Heart left ventricle (tissue), 16 donors: ENCODE measurements at regions of chr5 and their contacts with region 1.

Region 1: GRCh38 chr5:134904630-134905245 is at the start of gene PCBD2:
- DNase-seq: peak; percentile 91 to 97 (median 93)
- ATAC-seq: peak; percentile 93 to 96 (median 94)
- H3K4me3 ChIP-seq: peak within 1 kb of the TSS; percentile 45 to 97 (median 86)
- H3K27ac ChIP-seq: peak within 1 kb of the TSS; percentile 98 to 100 (median 100)
- H3K4me1 ChIP-seq: peaks cover 0 to 23% (median 0%) of the 10 kb centered on the region in 12 donors
- H3K27me3 ChIP-seq: no peaks in the 10 kb centered on the region
- CTCF ChIP-seq: peak; percentile 74 to 95 (median 89)
- POLR2A ChIP-seq: peak in 1 of 2 donors; percentile 54
- total RNA-seq, gene PCBD2: 14.0 to 31.6 (median 21.2) TPM

Region 2: DNA sequence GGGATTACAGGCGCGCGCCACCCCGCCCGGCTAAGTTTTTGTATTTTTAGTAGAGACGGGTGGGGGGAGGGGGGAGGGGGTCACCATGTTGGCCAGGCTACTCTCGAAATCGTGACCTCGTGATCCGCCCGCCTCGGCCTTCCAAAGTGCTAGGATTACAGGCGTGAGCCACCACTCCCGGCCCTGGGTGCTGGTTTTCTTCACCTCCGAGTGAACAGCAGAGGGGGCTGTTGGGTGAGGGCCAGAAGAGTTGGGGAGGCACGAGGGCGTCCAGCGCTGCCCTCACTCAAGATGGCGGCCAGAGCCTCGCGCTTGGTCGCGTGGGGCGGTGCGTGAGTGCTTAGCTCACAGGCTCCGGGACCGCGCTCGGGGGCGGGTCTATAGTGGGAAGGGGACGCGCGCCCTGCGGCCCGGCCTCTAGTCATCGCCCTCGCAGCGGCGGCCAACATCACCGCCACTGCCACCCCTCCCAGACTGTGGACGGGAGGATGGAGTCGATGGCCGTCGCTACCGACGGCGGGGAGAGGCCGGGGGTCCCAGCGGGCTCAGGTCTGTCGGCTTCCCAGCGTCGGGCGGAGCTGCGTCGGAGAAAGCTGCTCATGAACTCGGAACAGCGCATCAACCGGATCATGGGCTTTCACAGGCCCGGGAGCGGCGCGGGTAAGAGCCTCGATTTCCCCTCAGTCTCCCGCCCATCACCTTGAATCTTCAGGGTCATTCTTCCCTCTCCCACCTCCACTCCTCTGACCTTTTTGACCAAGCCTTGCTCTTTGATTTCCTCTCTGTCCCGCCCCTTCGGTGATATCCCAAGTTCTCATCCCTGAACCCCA is 166.4 kb before region 1 on chr5 and contains the start of gene CAMLG:
- intact Hi-C with region 1: loop called in 7 of 10 experiments (anchors 1 to 5 kb)
- DNase-seq: peak; percentile 98 to 99 (median 99)
- ATAC-seq: peak; percentile 99 to 100 (median 100)
- H3K4me3 ChIP-seq: peak within 1 kb of the TSS; percentile 75 to 97 (median 88)
- H3K27ac ChIP-seq: peak within 1 kb of the TSS; percentile 78 to 96 (median 92)
- H3K4me1 ChIP-seq: peaks cover 0 to 30% (median 12%) of the 10 kb centered on the region in 12 donors
- H3K27me3 ChIP-seq: no peaks in the 10 kb centered on the region
- CTCF ChIP-seq: peak; percentile 40 to 76 (median 61)
- POLR2A ChIP-seq: peak; percentile 42 to 93
- total RNA-seq, gene CAMLG: 11.6 to 20.9 (median 17.6) TPM

Region 3: DNA sequence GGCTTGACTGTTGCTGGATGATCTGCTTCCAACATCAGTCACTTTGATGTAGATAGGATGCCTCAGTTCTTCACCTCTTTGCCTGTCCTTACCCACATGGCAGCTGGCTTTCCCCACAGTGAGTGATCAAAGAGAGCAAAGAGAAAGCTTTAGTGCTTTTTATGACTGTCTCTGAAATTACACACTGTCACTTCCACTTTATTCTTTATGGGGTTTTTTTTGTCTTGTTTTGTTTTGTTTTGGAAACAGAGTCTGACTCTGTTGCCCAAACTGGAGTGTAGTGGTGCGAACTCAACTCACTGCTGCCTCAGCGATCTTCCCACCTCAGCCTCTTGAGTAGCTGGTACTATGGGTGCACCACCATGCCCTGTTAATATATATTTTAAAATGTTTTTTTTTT is 91.3 kb before region 1 on chr5:
- intact Hi-C with region 1: loop called in 1 of 10 experiments (anchors 10 kb)
- DNase-seq: no peak
- ATAC-seq: no peak
- H3K4me3 ChIP-seq: no peak overlapping the region
- H3K27ac ChIP-seq: no peak overlapping the region
- H3K4me1 ChIP-seq: peaks cover 0 to 9% (median 0%) of the 10 kb centered on the region in 12 donors
- H3K27me3 ChIP-seq: no peaks in the 10 kb centered on the region
- CTCF ChIP-seq: no peak
- POLR2A ChIP-seq: no peak

Region 4: GRCh38 chr5:134845852-134846640 is 58.7 kb before region 1 on chr5 and contains the start of gene C5orf24:
- intact Hi-C with region 1: loop called in 9 of 10 experiments (anchors 1 to 10 kb)
- DNase-seq: peak; percentile 94 to 97 (median 97)
- ATAC-seq: peak; percentile 98 to 99 (median 98)
- H3K4me3 ChIP-seq: peak within 1 kb of the TSS; percentile 68 to 99 (median 90)
- H3K27ac ChIP-seq: peak within 1 kb of the TSS; percentile 94 to 99 (median 97)
- H3K4me1 ChIP-seq: peaks cover 6 to 41% (median 27%) of the 10 kb centered on the region in 12 donors
- H3K27me3 ChIP-seq: no peaks in the 10 kb centered on the region
- CTCF ChIP-seq: peak in 1 of 12 donors; percentile 4
- POLR2A ChIP-seq: peak; percentile 84 to 98
- total RNA-seq, gene C5orf24: 23.4 to 32.9 (median 27.0) TPM

Region 5: GRCh38 chr5:134851307-134851923 is 53.3 kb before region 1 on chr5:
- intact Hi-C with region 1: loop called in 9 of 10 experiments (anchors 1 to 10 kb)
- DNase-seq: peak in 1 of 5 donors; percentile 5
- ATAC-seq: no peak
- H3K4me3 ChIP-seq: no peak overlapping the region
- H3K27ac ChIP-seq: no peak overlapping the region
- H3K4me1 ChIP-seq: peaks cover 6 to 47% (median 32%) of the 10 kb centered on the region in 12 donors
- H3K27me3 ChIP-seq: no peaks in the 10 kb centered on the region
- CTCF ChIP-seq: peak in 9 of 12 donors; percentile 10 to 47 (median 29)
- POLR2A ChIP-seq: no peak

Region 6: GRCh38 chr5:134873987-134874830 is 30.5 kb before region 1 on chr5 and contains the start of gene TXNDC15:
- intact Hi-C with region 1: loop called in 3 of 10 experiments (anchors 1 to 2 kb)
- DNase-seq: peak; percentile 90 to 94 (median 93)
- ATAC-seq: peak; percentile 90 to 97 (median 96)
- H3K4me3 ChIP-seq: peak within 1 kb of the TSS; percentile 74 to 97 (median 91)
- H3K27ac ChIP-seq: peak within 1 kb of the TSS; percentile 66 to 99 (median 96)
- H3K4me1 ChIP-seq: peaks cover 0 to 38% (median 18%) of the 10 kb centered on the region in 12 donors
- H3K27me3 ChIP-seq: no peaks in the 10 kb centered on the region
- CTCF ChIP-seq: no peak
- POLR2A ChIP-seq: peak in 1 of 2 donors; percentile 56
- total RNA-seq, gene TXNDC15: 38.4 to 59.7 (median 55.6) TPM